Right ventricle myocardium superior (tissue), 1 donor: ENCODE measurements at regions of chr6 and their contacts with region 1.

Region 1: DNA sequence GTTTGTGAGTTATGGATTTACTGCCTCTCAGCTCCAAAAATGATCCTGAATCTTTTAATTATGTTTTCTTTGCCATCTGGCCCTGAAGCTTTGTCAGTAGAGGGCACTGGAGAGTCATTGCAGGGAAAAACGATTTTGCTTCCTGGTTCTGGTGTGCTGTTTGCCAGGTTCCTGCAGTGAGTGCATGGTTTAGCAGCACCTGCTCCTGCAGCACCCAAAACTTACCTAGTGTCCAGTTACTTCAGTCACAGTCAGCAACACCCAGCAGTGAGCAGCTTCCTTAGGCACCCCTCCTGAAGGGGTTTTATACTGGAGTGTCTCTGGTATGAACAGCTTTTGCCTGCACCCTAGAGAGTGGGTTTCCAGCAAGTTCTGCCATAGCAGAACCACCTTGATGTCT is 6.0 kb upstream of the TRIM26 start:
- DNase-seq: no peak
- ATAC-seq: peak; percentile 42

Region 2: GRCh38 chr6:30396833-30397479 is 177.7 kb after region 1 on chr6:
- intact Hi-C with region 1: loop called (anchors 5 kb)
- DNase-seq: peak; percentile 89
- ATAC-seq: peak; percentile 95